RWPE1 (cell line): ENCODE measurements at regions of chr7 and their contacts with region 1.

Region 1: GRCh38 chr7:121366852-121367431 is 29.2 kb downstream of the FAM3C start:
- DNase-seq: peak; percentile 19
- H3K27ac ChIP-seq: no peak overlapping the region
- CTCF ChIP-seq: peak; percentile 88

Region 2: DNA sequence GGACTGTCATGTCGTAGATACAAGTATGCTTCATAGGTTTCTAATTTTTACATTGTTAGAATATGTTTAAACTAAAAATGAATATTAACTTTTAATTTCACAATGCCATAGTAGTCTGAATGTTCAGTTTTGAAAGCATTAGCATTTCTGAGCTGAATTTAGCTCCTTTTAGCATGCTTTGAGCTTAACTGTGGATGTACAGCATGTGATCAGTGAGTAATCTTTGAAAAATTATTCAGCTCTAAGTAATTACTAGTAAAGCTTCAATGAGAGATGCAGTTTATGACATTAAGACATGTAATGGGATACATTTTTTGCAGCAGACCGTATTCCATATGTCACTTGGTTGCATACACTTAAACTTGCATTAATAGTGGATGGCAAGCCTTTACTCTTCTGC is 152.3 kb before region 1 on chr7:
- CTCF ChIA-PET with region 1: no interaction called
- POLR2A ChIA-PET with region 1: no interaction called
- DNase-seq: no peak
- H3K27ac ChIP-seq: no peak overlapping the region
- CTCF ChIP-seq: no peak

Region 3: GRCh38 chr7:121466455-121466854 is 99.5 kb after region 1 on chr7:
- CTCF ChIA-PET with region 1: no interaction called
- POLR2A ChIA-PET with region 1: no interaction called
- DNase-seq: no peak
- H3K27ac ChIP-seq: no peak overlapping the region
- CTCF ChIP-seq: no peak

Region 4: GRCh38 chr7:121547544-121548092 is 180.7 kb after region 1 on chr7:
- CTCF ChIA-PET with region 1: interaction called, 12 read pairs
- POLR2A ChIA-PET with region 1: no interaction called
- DNase-seq: peak; percentile 66
- H3K27ac ChIP-seq: no peak overlapping the region
- CTCF ChIP-seq: peak; percentile 88